ENCODE measurements at regions of chr2 and their contacts with region 1.

Region 1: DNA sequence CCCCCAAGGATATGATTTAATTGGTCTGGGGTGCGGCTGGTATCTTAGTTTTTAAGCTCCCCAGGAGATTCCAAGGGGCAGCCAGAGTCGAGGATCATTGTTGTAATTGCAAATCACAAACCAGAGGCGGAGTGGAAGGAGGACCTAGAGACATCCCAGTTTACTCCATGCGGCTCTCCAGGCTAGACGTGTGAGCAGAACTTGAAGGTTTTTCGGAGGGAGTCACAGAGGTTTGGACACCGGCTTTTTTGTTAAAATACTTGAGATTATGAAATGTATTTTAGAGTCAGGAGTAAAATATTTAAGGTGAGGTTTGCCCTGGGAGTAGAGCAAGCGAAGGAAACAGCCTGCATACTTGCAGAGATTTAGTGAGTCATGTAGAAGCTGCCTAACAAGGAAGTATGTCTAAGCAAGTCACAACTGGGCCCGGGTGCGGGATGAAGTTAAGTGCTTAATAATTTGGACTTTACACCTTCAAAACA is 39.5 kb downstream of the TGOLN2 start:
- DNase-seq: peak; percentile 98
- H3K27ac ChIP-seq: peak overlapping the region; percentile 93
- CTCF ChIP-seq: no peak

Region 2: DNA sequence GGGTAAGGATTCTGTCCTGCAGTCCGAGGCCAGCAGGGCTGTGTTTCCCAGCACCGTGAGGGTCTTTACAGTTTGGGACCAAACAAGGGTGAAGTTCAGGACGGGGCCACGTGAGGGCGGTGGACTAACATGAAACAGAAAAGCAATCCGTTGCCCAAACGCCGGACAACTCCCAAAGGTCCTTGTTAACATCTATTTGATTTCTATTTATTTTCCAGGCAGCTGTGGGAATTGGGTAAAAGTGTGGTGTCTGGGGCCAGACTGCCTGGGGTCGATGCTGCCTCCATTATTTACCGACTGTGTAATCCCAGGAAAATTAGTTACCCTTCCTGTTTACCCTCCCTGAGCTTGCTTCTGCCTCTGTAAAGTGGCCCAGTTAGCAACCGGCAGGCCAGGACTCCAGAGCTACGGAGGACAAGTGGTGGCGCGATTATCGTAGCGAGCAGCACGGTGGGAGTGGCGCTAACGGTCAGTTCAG is 221.4 kb before region 1 on chr2:
- CTCF ChIA-PET with region 1: interaction called, 27 read pairs
- POLR2A ChIA-PET with region 1: no interaction called
- DNase-seq: peak; percentile 73
- H3K27ac ChIP-seq: peak overlapping the region; percentile 11; the same call in 1 of the 2 replicates
- CTCF ChIP-seq: peak; percentile 79

Region 3: GRCh38 chr2:85132834-85133637 is 155.2 kb before region 1 on chr2 and contains the start of gene TCF7L1:
- CTCF ChIA-PET with region 1: interaction called, 14 read pairs
- POLR2A ChIA-PET with region 1: no interaction called
- DNase-seq: peak; percentile 90
- H3K27ac ChIP-seq: peak within 1 kb of the TSS; percentile 83
- CTCF ChIP-seq: peak; percentile 86

Measured in RWPE1 (cell line).